Body of pancreas (tissue), 4 donors: ENCODE measurements at regions of chr18 and their contacts with region 1.

Region 1: GRCh38 chr18:35005963-35006577 is 35.1 kb upstream of the MAPRE2 start:
- DNase-seq: peak in 1 of 4 donors; percentile 43
- ATAC-seq: peak; percentile 90
- H3K4me3 ChIP-seq: no peak overlapping the region
- H3K27ac ChIP-seq: no peak overlapping the region
- H3K4me1 ChIP-seq: no peaks in the 10 kb centered on the region
- H3K27me3 ChIP-seq: no peaks in the 10 kb centered on the region
- CTCF ChIP-seq: peak; percentile 37 to 76 (median 65)
- POLR2A ChIP-seq: no peak

Region 2: GRCh38 chr18:35136248-35136647 is 130.2 kb after region 1 on chr18:
- intact Hi-C with region 1: loop called (anchors 5 kb)
- DNase-seq: no peak
- ATAC-seq: no peak
- H3K4me3 ChIP-seq: no peak overlapping the region
- H3K27ac ChIP-seq: no peak overlapping the region
- H3K4me1 ChIP-seq: peaks cover 11% of the 10 kb centered on the region
- H3K27me3 ChIP-seq: no peaks in the 10 kb centered on the region
- CTCF ChIP-seq: no peak
- POLR2A ChIP-seq: no peak

Region 3: GRCh38 chr18:35192415-35192814 is 186.3 kb after region 1 on chr18:
- intact Hi-C with region 1: no loop called
- DNase-seq: no peak
- ATAC-seq: no peak
- H3K4me3 ChIP-seq: no peak overlapping the region
- H3K27ac ChIP-seq: no peak overlapping the region
- H3K4me1 ChIP-seq: no peaks in the 10 kb centered on the region
- H3K27me3 ChIP-seq: no peaks in the 10 kb centered on the region
- CTCF ChIP-seq: no peak
- POLR2A ChIP-seq: no peak